ENCODE measurements at regions of chr17 and their contacts with region 1.

Region 1: DNA sequence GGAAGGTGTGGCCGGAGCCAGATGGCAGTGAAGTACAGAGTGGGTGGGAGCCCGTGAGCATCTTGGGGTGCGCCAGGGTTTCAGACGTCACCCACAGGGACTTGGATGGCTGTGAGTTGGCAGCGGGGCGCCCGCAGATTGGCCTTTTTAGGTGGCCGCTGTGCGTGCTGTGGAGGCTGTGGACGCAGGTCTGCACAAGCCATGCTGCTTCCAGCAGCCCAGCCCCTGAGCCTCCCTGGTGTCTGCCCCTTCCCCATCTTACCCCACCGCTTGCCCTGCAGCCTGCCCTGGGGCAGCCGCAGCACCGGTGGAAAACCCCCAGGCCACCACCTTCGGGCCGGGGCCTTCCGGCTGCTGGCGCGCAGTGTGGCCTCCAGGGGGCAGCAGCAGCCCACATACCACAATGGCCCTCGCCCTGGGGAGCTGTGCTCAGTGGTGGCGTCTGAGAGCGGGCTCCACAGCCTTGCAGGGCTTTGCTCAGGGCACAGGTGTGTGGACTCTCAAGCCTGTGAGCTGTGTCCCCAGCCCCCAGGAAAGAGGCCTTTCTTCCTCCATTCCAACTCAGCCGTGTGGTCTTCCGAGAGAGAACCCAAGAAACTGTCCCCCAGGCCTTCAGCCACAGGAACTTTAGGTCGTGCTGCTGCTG is 11.8 kb downstream of the ENDOV start:
- DNase-seq: no peak
- H3K4me3 ChIP-seq: no peak overlapping the region
- CTCF ChIP-seq: peak; percentile 96

Region 2: DNA sequence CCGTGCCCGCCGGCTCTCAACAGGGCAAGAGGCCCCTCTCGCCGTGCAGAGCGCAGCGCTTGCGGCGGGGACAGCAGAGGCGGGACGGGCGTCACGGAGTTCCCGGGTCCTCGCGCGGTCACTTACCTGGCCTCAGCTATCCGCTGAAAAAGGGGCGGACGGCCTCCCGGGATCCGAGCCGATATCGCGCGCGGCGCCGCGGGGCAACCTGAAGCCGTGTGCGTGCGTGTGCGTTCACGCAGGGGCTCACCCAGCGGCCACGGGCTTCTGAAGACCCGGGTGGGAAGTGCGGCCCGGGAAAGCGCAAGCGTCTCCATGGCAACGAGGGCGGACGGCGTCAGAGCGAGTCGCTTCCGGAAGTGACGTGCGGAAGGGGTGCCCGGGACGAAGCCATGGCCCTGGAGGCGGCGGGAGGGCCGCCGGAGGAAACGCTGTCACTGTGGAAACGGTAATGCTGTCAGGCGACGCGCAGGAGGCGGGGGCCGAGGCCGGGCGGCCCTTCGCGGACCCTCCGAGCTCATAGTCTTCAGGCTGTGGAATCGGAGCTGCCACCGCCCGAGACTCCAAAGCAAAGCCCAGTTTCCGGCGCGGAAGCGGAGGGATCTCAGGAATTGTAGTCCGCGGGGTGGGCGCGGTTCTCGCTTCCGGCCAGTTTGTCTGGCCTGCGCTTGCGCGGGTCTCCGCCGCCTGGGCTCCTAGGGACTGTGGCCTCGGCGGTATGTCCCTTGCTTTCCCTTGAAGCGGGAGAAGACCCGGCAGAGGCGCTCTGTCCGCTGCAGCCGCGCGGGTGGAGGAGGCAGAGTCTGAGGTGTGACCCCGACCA is 11.8 kb before region 1 on chr17 and contains the start of gene ENDOV:
- CTCF ChIA-PET with region 1: interaction called, 32 read pairs
- POLR2A ChIA-PET with region 1: no interaction called
- DNase-seq: peak; percentile 61
- H3K4me3 ChIP-seq: peak within 1 kb of the TSS; percentile 99
- CTCF ChIP-seq: no peak

Region 3: DNA sequence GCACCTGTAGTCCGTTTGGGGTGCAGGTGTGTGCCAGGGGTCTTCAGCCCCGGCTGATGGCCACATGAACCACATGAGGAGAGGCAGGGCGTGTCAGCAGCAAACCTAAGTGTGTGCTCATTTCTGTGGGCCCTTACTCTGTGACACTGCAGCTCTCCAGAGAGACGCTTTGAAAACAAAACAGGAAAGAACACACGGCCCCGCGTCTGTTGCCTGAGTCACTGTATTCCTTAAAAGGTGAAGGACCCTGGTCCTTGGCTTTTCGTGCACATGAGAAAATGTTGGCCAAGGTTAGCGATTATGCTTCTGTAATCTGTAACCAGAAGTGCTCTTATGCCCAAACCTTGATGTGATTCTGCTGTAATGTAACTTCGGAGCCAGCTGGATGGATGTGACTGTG is 10.7 kb after region 1 on chr17:
- CTCF ChIA-PET with region 1: interaction called, 10 read pairs
- POLR2A ChIA-PET with region 1: no interaction called
- DNase-seq: no peak
- H3K4me3 ChIP-seq: no peak overlapping the region
- CTCF ChIP-seq: no peak

Region 4: GRCh38 chr17:80575057-80575875 is 148.5 kb after region 1 on chr17:
- CTCF ChIA-PET with region 1: interaction called, 140 read pairs
- POLR2A ChIA-PET with region 1: no interaction called
- DNase-seq: peak; percentile 31
- H3K4me3 ChIP-seq: no peak overlapping the region
- CTCF ChIP-seq: peak; percentile 100

Region 5: DNA sequence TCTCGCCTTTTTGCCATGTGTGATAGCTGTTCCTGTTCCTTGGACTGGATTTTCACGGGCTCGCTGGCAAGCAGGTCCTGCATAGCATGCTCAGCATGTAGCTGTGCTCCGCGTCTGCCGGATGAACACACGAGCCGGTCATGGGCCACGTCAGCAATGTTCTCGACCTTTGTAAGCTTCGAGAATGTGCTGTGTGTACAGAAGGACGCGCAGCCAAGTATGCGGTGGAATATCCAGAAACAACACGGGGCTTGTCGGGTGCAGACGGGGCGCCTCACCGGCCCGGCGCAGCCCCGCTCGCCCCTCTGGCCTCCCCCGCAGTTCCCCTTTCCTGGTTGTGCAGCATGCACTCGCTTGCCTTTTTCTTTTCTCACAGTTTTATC is 160.0 kb after region 1 on chr17:
- CTCF ChIA-PET with region 1: interaction called, 11 read pairs
- POLR2A ChIA-PET with region 1: no interaction called
- DNase-seq: no peak
- H3K4me3 ChIP-seq: no peak overlapping the region
- CTCF ChIP-seq: no peak

Region 6: DNA sequence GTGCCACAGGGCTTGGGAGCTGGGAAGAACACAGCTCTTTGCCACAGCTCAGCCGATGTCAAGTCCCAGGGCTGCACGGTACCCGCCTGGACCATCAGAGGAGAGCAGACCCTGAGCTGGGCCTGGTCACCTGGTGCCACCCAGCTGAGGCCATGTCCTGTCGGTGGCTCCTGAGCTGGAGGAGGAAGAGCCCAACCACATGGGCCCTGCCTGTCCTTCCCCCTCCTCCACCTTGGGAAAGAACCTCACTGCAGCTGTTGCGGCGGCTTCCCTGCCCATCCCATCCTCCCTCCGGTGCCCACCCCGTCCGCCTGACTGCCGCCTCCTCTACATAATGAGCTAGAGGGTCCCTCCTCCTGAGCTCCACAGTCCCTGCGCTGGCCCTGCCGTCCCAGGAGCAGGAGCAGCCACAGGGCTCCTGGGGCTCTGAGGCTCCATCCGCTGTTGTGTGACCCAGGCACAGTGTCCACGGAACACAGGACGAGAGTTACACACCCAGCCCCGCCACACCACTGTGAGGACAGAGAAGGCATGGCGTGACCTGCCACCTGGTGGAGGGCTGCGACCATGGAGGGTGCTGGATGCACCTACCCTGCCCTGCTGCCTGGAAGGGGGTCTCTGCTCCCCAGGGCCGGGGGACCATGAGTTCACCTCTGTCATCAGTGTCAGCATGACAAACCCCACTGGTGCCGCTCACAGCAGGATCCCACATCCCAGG is 543.4 kb after region 1 on chr17:
- CTCF ChIA-PET with region 1: interaction called, 27 read pairs
- POLR2A ChIA-PET with region 1: interaction called, 4 read pairs
- DNase-seq: no peak
- H3K4me3 ChIP-seq: no peak overlapping the region
- CTCF ChIP-seq: peak; percentile 68

Region 7: DNA sequence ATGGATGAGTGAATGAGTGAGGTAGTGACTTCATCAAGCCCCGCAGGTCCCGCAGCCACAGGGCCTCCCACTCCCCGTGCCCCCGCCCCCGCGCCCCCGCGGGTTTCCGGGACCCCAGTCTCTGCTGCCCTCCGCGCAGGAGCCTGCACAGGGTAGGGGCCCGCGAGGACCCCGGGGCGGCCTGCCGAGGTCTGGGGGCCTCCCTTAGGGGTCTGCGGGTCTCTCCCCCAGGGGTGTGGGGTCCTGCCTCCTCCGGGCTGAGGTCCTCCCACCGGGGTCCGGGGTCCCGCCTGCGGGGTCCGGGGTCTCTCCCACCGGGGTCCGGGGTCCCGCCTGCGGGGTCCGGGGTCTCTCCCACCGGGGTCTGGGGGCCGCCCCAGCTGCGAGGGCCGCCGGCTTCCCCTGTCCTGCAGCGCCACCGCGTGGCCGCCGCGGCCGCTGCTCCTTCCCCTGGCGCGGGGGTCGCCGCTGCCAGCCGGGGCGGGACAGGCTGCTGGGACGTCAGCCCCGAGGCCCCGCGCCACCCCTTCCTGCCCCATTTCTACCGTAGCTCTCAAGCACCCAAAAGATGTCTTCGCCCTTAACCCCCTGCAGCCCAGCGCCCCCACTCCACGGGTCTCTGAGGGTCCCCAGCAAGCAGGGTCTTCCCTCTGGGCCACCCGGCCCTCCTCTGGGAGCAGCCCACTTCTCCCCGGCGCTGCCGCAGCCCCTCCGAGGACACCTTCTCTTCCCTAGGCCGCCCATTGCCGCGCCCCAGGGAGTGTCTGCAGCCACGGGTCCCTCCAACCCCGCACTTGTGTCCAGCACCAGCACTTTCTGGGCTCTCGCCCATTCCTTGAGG is 554.5 kb after region 1 on chr17:
- CTCF ChIA-PET with region 1: interaction called, 17 read pairs
- POLR2A ChIA-PET with region 1: interaction called, 4 read pairs
- DNase-seq: no peak
- H3K4me3 ChIP-seq: peak overlapping the region; percentile 36
- CTCF ChIP-seq: peak; percentile 59

Measured in AG04449 (cell line).